Activated CD4-positive, alpha-beta T cell treated with anti-CD3 and anti-CD28 coated beads for 36 hours (primary cell): ENCODE measurements at regions of chr15 and their contacts with region 1.

Region 1: GRCh38 chr15:78195735-78196201 is 38.6 kb downstream of the ACSBG1 start:
- DNase-seq: peak; percentile 66
- ATAC-seq: peak; percentile 87
- H3K4me3 Mint-ChIP-seq: no peak overlapping the region
- H3K27ac Mint-ChIP-seq: no peak overlapping the region
- H3K4me1 Mint-ChIP-seq: no peaks in the 10 kb centered on the region
- H3K27me3 Mint-ChIP-seq: no peaks in the 10 kb centered on the region

Region 2: GRCh38 chr15:77568973-77569728 is 626.6 kb before region 1 on chr15:
- CTCF ChIA-PET with region 1: no interaction called
- POLR2A ChIA-PET with region 1: no interaction called
- intact Hi-C with region 1: no loop called
- DNase-seq: no peak
- ATAC-seq: no peak
- H3K4me3 Mint-ChIP-seq: no peak overlapping the region
- H3K27ac Mint-ChIP-seq: no peak overlapping the region
- H3K4me1 Mint-ChIP-seq: no peaks in the 10 kb centered on the region
- H3K27me3 Mint-ChIP-seq: peaks cover 2% of the 10 kb centered on the region

Region 3: DNA sequence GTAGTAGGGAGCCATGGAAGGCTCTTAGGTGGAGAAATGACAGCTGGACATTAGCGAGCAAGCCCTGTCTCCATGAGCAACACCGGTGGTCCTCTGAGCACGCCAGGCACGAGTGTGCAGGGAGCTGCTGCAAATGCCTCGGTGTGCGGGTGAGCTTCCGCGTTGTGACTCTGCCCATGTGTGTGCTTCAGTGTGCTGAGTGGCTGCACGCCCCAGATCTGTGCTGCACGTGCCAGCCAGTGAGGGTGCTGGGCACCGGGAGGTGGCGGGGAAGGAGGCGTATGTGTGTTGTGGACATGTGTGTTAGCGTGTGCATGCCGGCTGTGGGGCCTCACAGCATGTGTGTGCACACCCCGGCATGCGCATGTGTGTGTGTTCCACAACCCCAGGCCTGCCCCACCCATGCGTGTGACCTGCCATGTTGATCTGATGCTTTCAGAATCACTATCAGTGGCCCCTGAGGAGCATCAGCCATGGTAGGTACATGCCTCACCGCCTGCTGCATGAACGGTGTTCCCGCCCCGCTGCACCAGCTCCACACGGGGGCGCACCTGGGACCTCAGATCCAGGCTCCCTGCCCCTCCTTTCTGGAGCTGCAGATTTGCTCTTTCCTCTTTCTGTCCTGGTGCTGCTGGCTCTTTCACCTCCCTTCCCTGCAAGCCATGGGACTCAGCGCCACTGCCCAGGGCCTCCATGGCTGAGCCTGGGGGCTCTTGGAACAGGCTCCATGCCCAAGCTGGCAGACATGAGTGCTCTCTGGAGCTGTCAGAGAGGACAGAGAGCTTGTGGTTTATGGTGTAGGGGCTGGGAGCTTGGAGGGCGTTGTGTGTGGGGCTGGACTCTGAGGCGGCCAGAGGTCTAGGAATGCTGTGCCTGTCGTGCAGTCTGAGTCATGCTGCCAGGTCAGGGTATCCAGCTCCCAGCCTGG is 287.7 kb before region 1 on chr15:
- CTCF ChIA-PET with region 1: interaction called, 4 read pairs
- POLR2A ChIA-PET with region 1: no interaction called
- intact Hi-C with region 1: loop called in 1 of 2 experiments (anchors 5 kb)
- DNase-seq: peak; percentile 86
- ATAC-seq: peak; percentile 83
- H3K4me3 Mint-ChIP-seq: no peak overlapping the region
- H3K27ac Mint-ChIP-seq: no peak overlapping the region
- H3K4me1 Mint-ChIP-seq: no peaks in the 10 kb centered on the region
- H3K27me3 Mint-ChIP-seq: peaks cover 7% of the 10 kb centered on the region

Region 4: GRCh38 chr15:77959432-77959879 is 236.3 kb before region 1 on chr15:
- CTCF ChIA-PET with region 1: interaction called, 12 read pairs
- POLR2A ChIA-PET with region 1: no interaction called
- intact Hi-C with region 1: loop called in 1 of 2 experiments (anchors 1 kb)
- DNase-seq: peak; percentile 87
- ATAC-seq: peak; percentile 98
- H3K4me3 Mint-ChIP-seq: no peak overlapping the region
- H3K27ac Mint-ChIP-seq: no peak overlapping the region
- H3K4me1 Mint-ChIP-seq: peaks cover 5% of the 10 kb centered on the region
- H3K27me3 Mint-ChIP-seq: peaks cover 6% of the 10 kb centered on the region

Region 5: GRCh38 chr15:77966540-77967290 is 229.1 kb before region 1 on chr15:
- CTCF ChIA-PET with region 1: interaction called, 15 read pairs
- POLR2A ChIA-PET with region 1: no interaction called
- intact Hi-C with region 1: no loop called
- DNase-seq: peak; percentile 71
- ATAC-seq: peak; percentile 75
- H3K4me3 Mint-ChIP-seq: no peak overlapping the region
- H3K27ac Mint-ChIP-seq: no peak overlapping the region
- H3K4me1 Mint-ChIP-seq: no peaks in the 10 kb centered on the region
- H3K27me3 Mint-ChIP-seq: peaks cover 2% of the 10 kb centered on the region

Region 6: GRCh38 chr15:78131295-78132061 is 64.3 kb before region 1 on chr15 and contains the start of gene CIB2:
- CTCF ChIA-PET with region 1: interaction called, 47 read pairs
- POLR2A ChIA-PET with region 1: no interaction called
- intact Hi-C with region 1: loop called (anchors 1 kb)
- DNase-seq: peak; percentile 86
- ATAC-seq: peak; percentile 87
- H3K4me3 Mint-ChIP-seq: peak within 1 kb of the TSS; percentile 82
- H3K27ac Mint-ChIP-seq: peak within 1 kb of the TSS; percentile 88
- H3K4me1 Mint-ChIP-seq: peaks cover 20% of the 10 kb centered on the region
- H3K27me3 Mint-ChIP-seq: no peaks in the 10 kb centered on the region
- total RNA-seq, gene CIB2: 0.91 to 1.2 TPM

Region 7: DNA sequence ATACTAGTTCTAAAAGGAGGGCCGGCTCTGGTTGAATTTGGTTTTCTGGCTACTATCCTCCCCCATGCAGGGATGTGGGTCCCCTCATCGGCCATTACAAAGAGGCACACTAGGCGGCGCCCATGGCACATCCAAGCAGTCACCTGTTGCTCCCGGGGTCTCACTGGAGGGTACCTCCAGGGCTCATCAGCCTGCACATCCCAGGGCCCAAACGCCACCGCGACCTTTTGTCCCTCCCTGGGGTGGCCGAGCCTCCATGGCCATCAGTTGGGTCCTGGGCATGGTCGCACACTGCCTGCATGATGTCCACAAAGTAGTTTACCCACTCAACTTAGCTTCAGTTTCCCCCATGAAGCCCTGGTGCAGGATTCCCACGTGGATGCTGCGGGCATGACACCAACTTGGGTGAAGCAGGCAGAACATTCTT is 18.3 kb before region 1 on chr15:
- CTCF ChIA-PET with region 1: interaction called, 12 read pairs
- POLR2A ChIA-PET with region 1: no interaction called
- intact Hi-C with region 1: no loop called
- DNase-seq: peak; percentile 68
- ATAC-seq: peak; percentile 69
- H3K4me3 Mint-ChIP-seq: no peak overlapping the region
- H3K27ac Mint-ChIP-seq: no peak overlapping the region
- H3K4me1 Mint-ChIP-seq: peaks cover 20% of the 10 kb centered on the region
- H3K27me3 Mint-ChIP-seq: no peaks in the 10 kb centered on the region